ENCODE measurements at regions of chr15 and their contacts with region 1.

Region 1: DNA sequence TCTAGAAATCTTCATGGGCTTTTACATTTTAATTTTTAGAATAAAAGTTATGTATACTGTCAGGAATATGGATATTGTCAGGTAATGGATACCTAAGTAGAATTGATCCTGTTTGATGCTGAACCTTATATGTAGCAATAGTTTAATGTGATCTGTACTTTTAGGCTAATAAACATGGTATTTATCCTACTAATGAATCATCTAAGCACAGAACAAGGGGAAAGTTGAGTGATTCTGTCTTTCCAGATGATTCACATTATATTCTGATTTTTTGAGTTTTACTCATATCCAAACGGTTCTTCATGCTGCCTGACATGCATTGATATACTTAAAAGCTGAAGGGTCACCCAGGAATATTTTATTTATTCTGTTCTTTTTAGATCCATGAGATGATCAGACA is 34.5 kb downstream of the FANCI start:
- DNase-seq: no peak
- H3K4me3 ChIP-seq: no peak overlapping the region
- CTCF ChIP-seq: no peak

Region 2: DNA sequence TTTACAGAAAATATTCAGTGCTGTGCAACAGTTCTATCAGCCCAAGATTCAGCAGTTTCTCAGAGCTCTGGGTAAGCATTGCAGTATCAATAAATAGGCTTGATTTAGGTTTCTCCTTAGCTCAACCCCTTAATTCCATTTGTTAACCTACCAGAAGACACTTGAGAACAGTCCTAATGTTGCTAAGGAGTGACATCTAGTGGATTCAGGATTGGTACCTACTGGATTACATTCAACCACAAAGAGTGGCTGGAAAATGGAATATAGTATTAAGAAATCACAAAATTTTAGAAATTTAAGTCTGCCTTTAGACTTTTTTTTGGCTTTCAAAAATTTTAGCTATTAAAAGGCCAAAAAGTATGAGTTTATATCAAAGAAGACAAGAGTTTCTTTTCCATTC is 21.6 kb after region 1 on chr15:
- CTCF ChIA-PET with region 1: interaction called, 17 read pairs
- POLR2A ChIA-PET with region 1: no interaction called
- DNase-seq: peak; percentile 23
- H3K4me3 ChIP-seq: no peak overlapping the region
- CTCF ChIP-seq: peak; percentile 20

Measured in AG04449 (cell line).